ENCODE measurements at regions of chr4 and their contacts with region 1.

Region 1: GRCh38 chr4:77385124-77385969 is 220.3 kb upstream of the CXCL13 start:
- DNase-seq: peak; percentile 25 to 89 (median 73)

Region 2: GRCh38 chr4:77433418-77433733 is 48.0 kb after region 1 on chr4:
- intact Hi-C with region 1: loop called (anchors 2 kb)
- DNase-seq: peak in 11 of 42 donors; percentile 2 to 54 (median 10)

Region 3: DNA sequence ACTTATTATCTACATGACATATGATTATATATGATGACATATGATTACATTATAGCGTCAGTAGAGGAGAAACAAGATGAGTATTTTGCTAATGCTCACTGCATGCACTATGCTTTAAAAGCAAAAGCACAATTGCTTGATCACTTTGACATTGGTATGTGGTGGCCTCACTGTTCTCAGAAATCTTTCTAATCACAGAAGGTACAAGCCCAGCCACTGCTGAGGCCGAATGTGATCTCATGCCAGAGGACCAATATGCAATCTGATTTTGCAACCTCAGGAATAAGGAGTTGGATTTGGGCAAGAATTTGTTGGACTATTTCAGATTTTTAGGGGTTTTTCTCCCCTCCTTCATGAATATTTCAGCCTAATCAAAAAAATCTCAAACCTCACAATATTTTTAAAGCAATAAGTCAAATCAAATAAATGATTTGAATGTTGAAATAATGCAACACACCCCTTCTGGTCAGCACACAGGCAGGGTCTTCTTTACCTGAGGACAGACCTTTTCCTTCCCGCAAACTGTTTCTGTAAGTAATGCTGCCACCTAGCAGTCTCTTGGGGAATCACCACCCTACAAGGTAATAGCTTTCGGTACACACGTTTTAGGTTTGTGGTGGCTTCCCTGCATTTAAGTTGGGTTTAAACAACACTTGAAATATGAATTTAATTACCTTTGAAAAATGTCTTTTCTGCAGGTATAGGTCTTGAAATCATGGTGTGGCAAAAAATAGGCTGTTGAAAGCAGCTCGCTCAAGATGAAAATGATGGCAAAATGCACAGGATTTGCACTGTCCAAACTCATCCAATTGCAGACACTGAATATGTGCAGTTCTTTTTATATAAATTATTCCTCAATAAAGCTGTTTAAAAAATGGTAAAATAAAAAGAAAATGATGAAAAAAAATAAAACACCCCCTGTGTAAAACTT is 215.4 kb after region 1 on chr4:
- intact Hi-C with region 1: loop called (anchors 10 kb)
- DNase-seq: peak in 21 of 42 donors; percentile 7 to 63 (median 31)

Measured in head of caudate nucleus (tissue), 42 donors.